Right ventricle myocardium inferior (tissue), 1 donor: ENCODE measurements at regions of chr9 and their contacts with region 1.

Region 1: GRCh38 chr9:129383561-129384416 is 205.7 kb upstream of the IER5L start:
- DNase-seq: peak; percentile 95
- ATAC-seq: peak; percentile 91

Region 2: DNA sequence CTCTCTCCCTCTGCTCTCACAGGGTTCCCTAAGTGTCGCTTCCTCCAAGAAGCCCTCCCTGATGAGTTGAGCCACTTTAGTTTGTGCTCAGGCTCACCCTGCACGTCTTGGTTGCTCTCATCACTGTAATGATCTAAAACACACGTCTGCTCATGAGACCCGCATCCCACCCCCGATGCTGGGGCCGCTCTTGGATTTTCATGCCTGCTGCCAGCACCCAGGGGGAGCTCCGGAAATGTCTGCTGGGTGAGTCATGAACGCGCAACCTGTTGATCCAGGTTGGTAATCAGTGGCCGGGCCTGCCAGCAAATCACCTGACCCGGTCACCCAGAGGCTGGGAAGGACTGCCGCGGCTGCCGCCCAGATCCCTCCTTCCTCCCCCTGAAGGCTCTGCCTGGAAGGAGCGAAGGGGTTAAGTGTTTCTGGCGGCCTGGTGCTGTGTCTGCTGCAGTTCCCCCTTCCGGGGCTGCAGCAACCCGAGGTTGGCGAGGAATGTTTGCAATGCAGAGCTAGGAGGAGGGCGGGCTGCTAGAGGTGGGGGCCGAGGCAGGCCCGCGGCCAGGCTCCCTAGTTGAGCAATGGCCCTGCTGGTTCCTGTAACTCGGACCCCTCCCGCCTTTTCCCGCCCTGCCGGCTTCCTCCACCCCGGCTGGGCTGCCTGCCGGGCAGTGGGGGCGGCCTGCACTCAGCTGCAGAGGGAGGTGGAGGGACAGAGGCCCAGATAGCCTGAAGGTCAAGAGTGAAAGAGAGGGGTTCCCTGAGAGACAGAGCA is 49.6 kb before region 1 on chr9:
- intact Hi-C with region 1: loop called (anchors 2 kb)
- DNase-seq: peak; percentile 97
- ATAC-seq: peak; percentile 92

Region 3: GRCh38 chr9:129352146-129352865 is 31.5 kb before region 1 on chr9:
- intact Hi-C with region 1: no loop called
- DNase-seq: no peak
- ATAC-seq: peak; percentile 20

Region 4: DNA sequence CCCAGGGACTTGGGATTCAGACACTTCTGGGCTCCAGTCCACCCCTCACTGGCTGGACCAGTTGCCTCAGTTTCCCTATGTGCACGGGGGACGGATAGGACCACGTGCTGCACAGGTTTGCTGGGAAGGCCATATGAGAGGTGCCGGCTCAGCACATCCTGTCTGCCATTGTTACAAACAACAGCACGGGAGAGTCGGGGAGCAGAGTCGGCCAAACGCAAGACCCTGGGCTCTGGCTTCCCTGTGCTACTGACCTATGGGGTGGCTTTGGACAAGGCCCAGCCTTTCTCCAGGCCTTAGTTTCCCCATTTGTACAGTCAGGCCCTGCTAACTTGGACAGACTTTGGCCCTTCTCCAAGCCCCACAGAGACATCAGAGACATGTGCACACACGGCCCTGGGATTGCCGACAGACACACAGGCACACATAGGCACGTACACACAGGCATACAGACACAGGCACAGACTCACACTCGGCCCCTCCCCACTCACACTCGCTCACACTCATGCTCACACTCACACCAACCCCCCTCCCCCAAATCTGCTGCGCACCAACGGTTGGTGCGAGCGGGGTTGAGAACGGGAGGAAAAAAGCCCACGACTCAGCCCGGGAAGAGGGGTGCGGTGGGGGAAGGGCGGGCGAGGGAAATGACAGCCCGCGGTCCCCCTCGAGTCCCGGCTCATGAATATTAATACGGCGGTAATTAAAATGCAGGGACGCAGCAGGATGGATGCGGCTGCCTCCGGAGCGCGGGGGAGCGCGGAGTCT is 104.0 kb after region 1 on chr9:
- intact Hi-C with region 1: loop called (anchors 2 kb)
- DNase-seq: peak; percentile 81
- ATAC-seq: no peak